ENCODE measurements at regions of chr7 and their contacts with region 1.

Region 1: DNA sequence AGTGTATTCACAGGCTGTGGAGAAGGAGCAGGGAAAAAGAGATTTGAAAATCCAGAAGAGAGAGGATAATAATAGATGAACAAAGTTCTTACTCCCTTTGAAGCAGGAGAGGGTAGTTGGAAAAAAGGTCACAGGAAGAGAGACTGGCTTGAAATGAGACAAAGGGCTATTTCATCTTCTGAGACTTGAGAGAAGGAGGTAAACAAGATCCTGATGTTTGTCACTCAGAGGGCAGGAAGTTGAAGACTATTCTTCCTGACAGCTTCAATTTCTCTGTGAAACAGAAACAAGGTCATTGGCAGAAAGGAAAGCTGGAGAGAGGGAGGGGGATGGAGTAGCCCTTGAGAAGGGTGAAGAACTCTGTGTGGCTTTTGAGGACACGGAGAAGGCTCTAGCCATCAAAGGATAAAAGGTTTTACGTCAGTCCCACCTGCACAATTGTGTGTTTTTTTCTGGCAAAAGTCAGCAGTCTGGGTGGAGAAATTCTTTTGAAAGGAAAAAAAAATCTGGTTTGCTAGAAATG is 216.1 kb upstream of the STEAP4 start:
- DNase-seq: no peak
- ATAC-seq: no peak
- H3K4me3 ChIP-seq: no peak overlapping the region
- H3K27ac ChIP-seq: no peak overlapping the region
- H3K4me1 ChIP-seq: no peaks in the 10 kb centered on the region
- H3K27me3 ChIP-seq: no peaks in the 10 kb centered on the region
- CTCF ChIP-seq: no peak

Region 2: GRCh38 chr7:88566173-88566729 is 43.4 kb after region 1 on chr7:
- CTCF ChIA-PET with region 1: no interaction called
- POLR2A ChIA-PET with region 1: no interaction called
- in situ Hi-C with region 1: no loop called
- intact Hi-C with region 1: loop called (anchors 5 kb)
- DNase-seq: no peak
- ATAC-seq: no peak
- H3K4me3 ChIP-seq: no peak overlapping the region
- H3K27ac ChIP-seq: no peak overlapping the region
- H3K4me1 ChIP-seq: no peaks in the 10 kb centered on the region
- H3K27me3 ChIP-seq: no peaks in the 10 kb centered on the region
- CTCF ChIP-seq: no peak

Region 3: GRCh38 chr7:88700725-88701124 is 177.9 kb after region 1 on chr7:
- CTCF ChIA-PET with region 1: no interaction called
- POLR2A ChIA-PET with region 1: no interaction called
- in situ Hi-C with region 1: no loop called
- intact Hi-C with region 1: no loop called
- DNase-seq: no peak
- ATAC-seq: no peak
- H3K4me3 ChIP-seq: no peak overlapping the region
- H3K27ac ChIP-seq: no peak overlapping the region
- H3K4me1 ChIP-seq: no peaks in the 10 kb centered on the region
- H3K27me3 ChIP-seq: no peaks in the 10 kb centered on the region
- CTCF ChIP-seq: no peak

Region 4: DNA sequence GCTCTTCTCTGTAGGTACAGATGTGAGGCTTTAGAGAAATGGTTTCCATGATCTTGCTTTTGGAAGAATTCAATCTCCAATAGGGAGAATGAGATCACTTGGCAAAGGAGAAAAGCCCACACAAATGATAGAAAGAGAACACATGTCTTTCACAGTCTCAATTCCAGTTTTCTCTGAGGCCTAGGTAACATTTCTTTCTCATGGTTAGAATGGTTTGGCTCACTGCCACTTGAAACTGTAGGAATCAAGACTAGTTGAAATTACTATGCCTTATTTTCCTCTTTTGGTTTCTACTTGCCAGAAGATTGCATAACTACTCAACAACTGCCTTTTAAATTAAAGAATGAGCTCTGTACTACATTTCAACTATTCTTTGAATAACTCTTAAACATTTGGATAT is 549.2 kb after region 1 on chr7:
- CTCF ChIA-PET with region 1: no interaction called
- POLR2A ChIA-PET with region 1: no interaction called
- in situ Hi-C with region 1: no loop called
- intact Hi-C with region 1: no loop called
- DNase-seq: no peak
- ATAC-seq: no peak
- H3K4me3 ChIP-seq: no peak overlapping the region
- H3K27ac ChIP-seq: no peak overlapping the region
- H3K4me1 ChIP-seq: no peaks in the 10 kb centered on the region
- H3K27me3 ChIP-seq: no peaks in the 10 kb centered on the region
- CTCF ChIP-seq: no peak